PC-9 (cell line): ENCODE measurements at regions of chr12 and their contacts with region 1.

Region 1: DNA sequence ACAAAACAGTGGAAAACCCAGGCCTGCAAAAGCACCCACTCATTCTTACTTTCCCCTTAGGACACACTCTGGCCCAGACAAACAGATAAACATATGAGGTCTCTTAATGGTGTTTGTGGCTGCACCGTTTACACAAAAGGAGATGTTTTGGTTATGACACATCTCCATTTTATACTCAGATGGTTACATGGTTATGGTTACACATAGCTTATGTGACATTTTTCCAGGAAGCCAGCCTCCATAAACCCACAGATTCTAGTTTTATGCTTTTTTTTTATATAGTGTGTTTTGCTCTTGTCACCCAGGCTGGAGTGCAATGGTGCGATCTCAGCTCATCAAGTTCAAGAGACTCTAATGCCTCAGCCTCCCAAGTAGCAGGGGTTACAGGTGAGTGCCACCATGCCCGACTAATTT is 3.5 kb upstream of the KLRD1 start:
- DNase-seq: peak in 1 of 2 experiments; percentile 49
- H3K4me3 ChIP-seq: no peak overlapping the region
- H3K27ac ChIP-seq: no peak overlapping the region
- H3K4me1 ChIP-seq: no peaks in the 10 kb centered on the region
- H3K27me3 ChIP-seq: no peaks in the 10 kb centered on the region
- CTCF ChIP-seq: no peak

Region 2: GRCh38 chr12:10052193-10052913 is 251.8 kb before region 1 on chr12:
- CTCF ChIA-PET with region 1: no interaction called
- POLR2A ChIA-PET with region 1: interaction called, 20 read pairs
- intact Hi-C with region 1: no loop called
- DNase-seq: no peak
- H3K4me3 ChIP-seq: no peak overlapping the region
- H3K27ac ChIP-seq: no peak overlapping the region
- H3K4me1 ChIP-seq: no peaks in the 10 kb centered on the region
- H3K27me3 ChIP-seq: no peaks in the 10 kb centered on the region
- CTCF ChIP-seq: no peak

Region 3: DNA sequence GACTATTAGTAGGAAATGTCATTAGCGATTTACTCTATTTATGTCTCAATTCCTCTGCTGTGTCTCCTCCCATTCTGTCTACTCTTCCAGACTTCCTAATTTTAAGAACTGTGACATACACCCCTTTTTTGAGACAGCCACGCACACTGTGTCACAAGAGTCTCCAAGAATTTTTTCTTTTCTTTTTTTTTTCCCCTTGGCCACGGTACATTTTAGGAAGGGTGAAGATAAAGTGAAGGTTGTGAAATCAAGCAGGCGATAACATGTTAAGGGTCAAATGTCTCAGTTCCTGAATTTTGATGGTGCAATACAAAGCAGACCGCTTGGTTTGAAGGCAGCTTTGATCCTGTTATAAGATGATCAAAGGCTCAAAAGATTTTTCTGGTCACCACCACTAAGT is 136.6 kb before region 1 on chr12:
- CTCF ChIA-PET with region 1: no interaction called
- POLR2A ChIA-PET with region 1: interaction called, 18 read pairs
- intact Hi-C with region 1: no loop called
- DNase-seq: no peak
- H3K4me3 ChIP-seq: no peak overlapping the region
- H3K27ac ChIP-seq: no peak overlapping the region
- H3K4me1 ChIP-seq: peaks cover 36% of the 10 kb centered on the region
- H3K27me3 ChIP-seq: no peaks in the 10 kb centered on the region
- CTCF ChIP-seq: no peak

Region 4: DNA sequence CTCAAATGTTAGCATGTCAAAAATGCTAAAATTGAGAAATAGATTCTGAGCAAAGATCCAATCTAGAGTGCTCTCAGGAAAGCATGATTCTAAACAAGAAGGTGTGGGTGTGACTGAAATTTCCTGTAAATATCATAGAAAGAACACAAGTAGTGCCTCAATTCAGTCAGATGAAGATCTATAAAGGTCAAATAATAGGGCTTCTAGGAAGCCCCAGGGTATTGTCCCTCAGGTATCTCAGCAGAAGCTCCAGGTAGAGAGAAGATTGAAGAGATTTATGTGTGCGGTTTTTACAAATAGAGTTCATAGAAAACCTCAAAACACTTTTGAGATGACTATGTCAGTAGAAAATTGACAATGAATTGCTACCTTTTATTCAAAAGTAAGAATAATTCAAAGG is 16.5 kb after region 1 on chr12:
- CTCF ChIA-PET with region 1: no interaction called
- POLR2A ChIA-PET with region 1: interaction called, 33 read pairs
- intact Hi-C with region 1: no loop called
- DNase-seq: no peak
- H3K4me3 ChIP-seq: no peak overlapping the region
- H3K27ac ChIP-seq: no peak overlapping the region
- H3K4me1 ChIP-seq: no peaks in the 10 kb centered on the region
- H3K27me3 ChIP-seq: no peaks in the 10 kb centered on the region
- CTCF ChIP-seq: no peak

Region 5: GRCh38 chr12:10331642-10332239 is 27.6 kb after region 1 on chr12:
- CTCF ChIA-PET with region 1: no interaction called
- POLR2A ChIA-PET with region 1: no interaction called
- intact Hi-C with region 1: no loop called
- DNase-seq: peak in 1 of 2 experiments; percentile 19
- H3K4me3 ChIP-seq: no peak overlapping the region
- H3K27ac ChIP-seq: no peak overlapping the region
- H3K4me1 ChIP-seq: no peaks in the 10 kb centered on the region
- H3K27me3 ChIP-seq: no peaks in the 10 kb centered on the region
- CTCF ChIP-seq: peak; percentile 79

Region 6: DNA sequence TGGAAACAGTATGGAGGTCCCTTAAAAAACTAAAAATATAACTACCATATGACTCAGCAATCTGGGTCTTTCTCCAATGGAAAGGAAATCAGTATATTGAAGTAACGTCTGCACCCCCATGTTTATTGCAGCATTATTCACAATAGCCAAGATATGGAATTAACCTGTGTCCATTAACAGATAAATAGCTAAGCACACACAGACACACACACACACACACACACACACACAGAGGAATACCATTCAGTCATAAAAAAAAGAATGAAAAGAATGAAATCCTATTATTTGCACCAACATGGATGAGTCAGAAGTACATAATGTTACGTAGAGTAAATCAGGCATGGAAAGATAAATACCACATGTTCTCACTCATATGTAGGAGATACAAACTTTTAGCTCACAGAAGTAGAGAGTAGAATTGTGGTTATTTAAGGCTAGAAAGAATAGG is 81.0 kb after region 1 on chr12:
- CTCF ChIA-PET with region 1: no interaction called
- POLR2A ChIA-PET with region 1: interaction called, 12 read pairs
- intact Hi-C with region 1: no loop called
- DNase-seq: no peak
- H3K4me3 ChIP-seq: no peak overlapping the region
- H3K27ac ChIP-seq: no peak overlapping the region
- H3K4me1 ChIP-seq: no peaks in the 10 kb centered on the region
- H3K27me3 ChIP-seq: no peaks in the 10 kb centered on the region
- CTCF ChIP-seq: no peak